ENCODE measurements at regions of chr17 and their contacts with region 1.

Region 1: GRCh38 chr17:42928714-42929496 is 28.3 kb downstream of the G6PC1 start:
- DNase-seq: peak; percentile 92

Region 2: DNA sequence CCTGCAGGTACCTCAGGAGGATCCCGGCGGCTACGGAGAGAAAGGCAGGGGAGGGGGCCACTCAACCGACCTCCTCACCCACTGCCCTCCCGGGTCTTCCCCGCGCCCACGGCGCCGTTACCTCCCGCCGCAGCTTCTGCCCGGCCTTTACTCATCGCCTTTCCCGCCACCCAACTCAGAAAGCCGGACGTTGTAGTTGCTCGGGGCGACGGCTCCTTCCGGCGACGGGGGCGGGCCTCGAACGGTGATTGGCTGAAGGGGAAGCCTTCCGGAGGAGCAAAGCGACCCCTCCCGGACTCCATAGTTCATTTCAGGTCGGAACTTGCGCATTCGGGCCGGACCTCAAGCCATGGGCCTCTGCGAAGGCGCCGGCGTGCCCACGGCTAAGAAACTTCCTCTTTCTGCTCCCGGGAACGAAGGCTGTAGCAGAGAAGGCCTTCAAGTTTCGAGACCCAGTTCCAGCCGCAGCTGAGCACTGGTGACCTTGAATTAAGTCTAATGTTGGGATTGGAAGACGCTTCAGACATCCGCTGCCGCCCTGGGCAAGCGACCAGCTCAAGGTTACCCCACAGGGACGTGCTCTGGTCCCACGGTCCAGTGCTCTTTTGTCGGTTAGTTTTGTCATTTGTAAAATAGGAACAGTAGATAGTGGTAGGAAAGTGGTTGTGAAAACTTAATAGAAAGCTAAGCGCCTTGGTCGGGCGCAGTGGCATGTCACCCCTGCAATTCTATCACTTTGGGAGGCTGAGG is 351.2 kb before region 1 on chr17 and contains the start of gene PSMC3IP:
- in situ Hi-C with region 1: loop called (anchors 25 kb)
- DNase-seq: peak; percentile 97

Region 3: GRCh38 chr17:42832974-42833766 is 95.7 kb before region 1 on chr17 and contains the start of gene PSME3:
- in situ Hi-C with region 1: loop called (anchors 25 kb)
- DNase-seq: peak; percentile 90